ENCODE measurements at regions of chr4 and their contacts with region 1.

Region 1: DNA sequence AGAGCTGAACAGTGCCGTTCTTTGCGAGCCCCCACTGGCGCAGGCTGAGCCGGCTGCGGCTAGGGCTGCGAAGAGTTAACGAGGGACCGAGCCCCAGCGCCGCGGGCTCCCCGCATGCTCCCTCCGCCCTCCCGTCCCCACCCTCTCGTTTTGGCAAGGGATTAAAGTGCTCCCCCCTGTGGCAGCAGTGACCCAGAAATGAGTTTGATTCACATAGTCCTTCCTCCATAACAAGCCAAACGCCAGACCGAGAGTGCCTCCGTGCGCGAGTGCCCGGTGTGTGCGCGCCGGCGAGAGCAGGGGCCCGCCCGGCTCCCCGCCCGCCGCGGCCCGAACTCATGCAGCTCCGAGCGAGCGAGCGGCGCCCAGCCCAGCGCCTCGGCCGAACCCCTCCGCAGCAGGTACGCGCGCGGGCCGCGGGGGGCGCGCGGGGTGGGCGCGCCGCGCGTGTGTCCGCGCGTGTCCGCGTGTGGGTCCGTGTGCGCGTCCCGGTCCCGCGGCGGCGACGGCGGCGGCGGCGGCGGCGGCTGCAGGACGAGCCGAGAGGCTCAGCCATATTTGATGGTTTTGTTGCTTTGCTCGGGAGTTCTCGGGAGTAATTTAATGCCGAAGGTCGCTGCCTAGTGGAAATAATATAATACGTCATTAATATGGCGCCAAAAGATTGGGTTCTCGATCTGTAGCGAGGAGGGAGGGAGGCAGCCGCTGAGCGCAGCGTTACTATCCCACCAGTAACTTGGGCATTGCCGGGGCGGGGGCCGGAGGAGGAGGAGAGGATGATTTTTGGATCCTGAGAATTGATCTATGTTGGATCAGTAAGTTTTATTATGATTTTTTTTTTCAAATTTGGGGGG is at the start of gene JADE1:
- DNase-seq: peak; percentile 79 to 91 (median 89)
- ATAC-seq: peak; percentile 82
- H3K4me3 ChIP-seq: peak within 1 kb of the TSS; percentile 99
- H3K4me3 Mint-ChIP-seq: peak within 1 kb of the TSS; percentile 93 to 100 (median 97)
- H3K27ac ChIP-seq: peak within 1 kb of the TSS; percentile 93
- H3K27ac Mint-ChIP-seq: peak within 1 kb of the TSS; percentile 93 to 100 (median 96)
- H3K4me1 ChIP-seq: peaks cover 5 to 17% of the 10 kb centered on the region in 2 donors
- H3K4me1 Mint-ChIP-seq: peaks cover 12 to 28% (median 17%) of the 10 kb centered on the region in 7 donors
- H3K27me3 ChIP-seq: no peaks in the 10 kb centered on the region
- H3K27me3 Mint-ChIP-seq: no peaks in the 10 kb centered on the region
- total RNA-seq, gene JADE1: 35.4 to 79.5 (median 62.2) TPM

Region 2: GRCh38 chr4:127965062-127965802 is 844.5 kb before region 1 on chr4 and contains the starts of genes ABHD18 and MFSD8:
- CTCF ChIA-PET with region 1: no interaction called
- POLR2A ChIA-PET with region 1: no interaction called
- intact Hi-C with region 1: loop called (anchors 1 kb)
- DNase-seq: peak; percentile 93 to 98 (median 98)
- ATAC-seq: peak; percentile 96
- H3K4me3 ChIP-seq: peak within 1 kb of the TSS; percentile 100
- H3K4me3 Mint-ChIP-seq: peak within 1 kb of the TSS; percentile 78 to 98 (median 94)
- H3K27ac ChIP-seq: peak within 1 kb of the TSS; percentile 92
- H3K27ac Mint-ChIP-seq: peak within 1 kb of the TSS; percentile 88 to 99 (median 95)
- H3K4me1 ChIP-seq: peaks cover 5 to 13% of the 10 kb centered on the region in 2 donors
- H3K4me1 Mint-ChIP-seq: peaks cover 14 to 66% (median 52%) of the 10 kb centered on the region in 7 donors
- H3K27me3 ChIP-seq: no peaks in the 10 kb centered on the region
- H3K27me3 Mint-ChIP-seq: peaks cover 0 to 3% (median 0%) of the 10 kb centered on the region in 5 donors
- total RNA-seq, gene ABHD18: 22.4 to 26.6 (median 25.1) TPM
- total RNA-seq, gene MFSD8: 20.3 to 54.5 (median 23.0) TPM

Region 3: GRCh38 chr4:128287871-128288688 is 521.6 kb before region 1 on chr4:
- CTCF ChIA-PET with region 1: no interaction called
- POLR2A ChIA-PET with region 1: interaction called, 8 read pairs
- intact Hi-C with region 1: loop called (anchors 1 kb)
- DNase-seq: peak; percentile 97 to 100 (median 98)
- ATAC-seq: peak; percentile 90
- H3K4me3 ChIP-seq: peak overlapping the region; percentile 88
- H3K4me3 Mint-ChIP-seq: peak overlapping the region; percentile 81 to 98 (median 87)
- H3K27ac ChIP-seq: peak overlapping the region; percentile 98
- H3K27ac Mint-ChIP-seq: peak overlapping the region; percentile 82 to 99 (median 96)
- H3K4me1 ChIP-seq: peaks cover 12 to 25% of the 10 kb centered on the region in 2 donors
- H3K4me1 Mint-ChIP-seq: peaks cover 26 to 50% (median 46%) of the 10 kb centered on the region in 7 donors
- H3K27me3 ChIP-seq: no peaks in the 10 kb centered on the region
- H3K27me3 Mint-ChIP-seq: no peaks in the 10 kb centered on the region

Region 4: DNA sequence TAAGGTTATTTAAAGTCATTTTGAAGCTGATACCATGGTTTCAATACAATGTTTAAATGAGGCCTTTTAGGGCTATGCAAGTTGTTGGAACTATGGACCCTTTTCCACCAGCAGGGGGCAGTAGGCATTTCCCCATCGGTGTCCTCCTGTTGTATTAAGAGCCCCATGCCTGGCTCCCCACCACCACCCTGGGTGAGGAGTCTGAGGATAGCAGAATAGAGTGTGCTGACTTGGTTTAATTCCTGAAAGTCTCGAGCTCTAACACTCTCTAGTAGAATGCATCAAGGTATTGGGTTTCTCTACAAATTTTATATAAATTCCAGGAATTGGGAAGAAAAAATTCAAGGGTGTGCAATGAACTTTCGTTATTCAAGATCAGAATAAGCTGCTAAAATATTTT is 235.0 kb before region 1 on chr4:
- CTCF ChIA-PET with region 1: interaction called, 9 read pairs
- POLR2A ChIA-PET with region 1: no interaction called
- intact Hi-C with region 1: loop called (anchors 1 kb)
- DNase-seq: peak; percentile 16 to 64 (median 51)
- ATAC-seq: peak; percentile 67
- H3K4me3 ChIP-seq: no peak overlapping the region
- H3K4me3 Mint-ChIP-seq: no peak overlapping the region
- H3K27ac ChIP-seq: no peak overlapping the region
- H3K27ac Mint-ChIP-seq: no peak overlapping the region
- H3K4me1 ChIP-seq: no peaks in the 10 kb centered on the region
- H3K4me1 Mint-ChIP-seq: no peaks in the 10 kb centered on the region
- H3K27me3 ChIP-seq: no peaks in the 10 kb centered on the region
- H3K27me3 Mint-ChIP-seq: peaks cover 0 to 16% (median 12%) of the 10 kb centered on the region in 5 donors

Region 5: GRCh38 chr4:128835498-128836222 is 26.0 kb after region 1 on chr4:
- CTCF ChIA-PET with region 1: no interaction called
- POLR2A ChIA-PET with region 1: interaction called, 8 read pairs
- intact Hi-C with region 1: loop called in 1 of 2 experiments (anchors 1 kb)
- DNase-seq: no peak
- ATAC-seq: no peak
- H3K4me3 ChIP-seq: no peak overlapping the region
- H3K4me3 Mint-ChIP-seq: peak overlapping the region in 3 of 10 donors; percentile 23 to 43 (median 34)
- H3K27ac ChIP-seq: no peak overlapping the region
- H3K27ac Mint-ChIP-seq: peak overlapping the region in 4 of 9 donors; percentile 30 to 74 (median 50)
- H3K4me1 ChIP-seq: peaks cover 9 to 27% of the 10 kb centered on the region in 2 donors
- H3K4me1 Mint-ChIP-seq: peaks cover 38 to 91% (median 81%) of the 10 kb centered on the region in 7 donors
- H3K27me3 ChIP-seq: no peaks in the 10 kb centered on the region
- H3K27me3 Mint-ChIP-seq: no peaks in the 10 kb centered on the region

Region 6: DNA sequence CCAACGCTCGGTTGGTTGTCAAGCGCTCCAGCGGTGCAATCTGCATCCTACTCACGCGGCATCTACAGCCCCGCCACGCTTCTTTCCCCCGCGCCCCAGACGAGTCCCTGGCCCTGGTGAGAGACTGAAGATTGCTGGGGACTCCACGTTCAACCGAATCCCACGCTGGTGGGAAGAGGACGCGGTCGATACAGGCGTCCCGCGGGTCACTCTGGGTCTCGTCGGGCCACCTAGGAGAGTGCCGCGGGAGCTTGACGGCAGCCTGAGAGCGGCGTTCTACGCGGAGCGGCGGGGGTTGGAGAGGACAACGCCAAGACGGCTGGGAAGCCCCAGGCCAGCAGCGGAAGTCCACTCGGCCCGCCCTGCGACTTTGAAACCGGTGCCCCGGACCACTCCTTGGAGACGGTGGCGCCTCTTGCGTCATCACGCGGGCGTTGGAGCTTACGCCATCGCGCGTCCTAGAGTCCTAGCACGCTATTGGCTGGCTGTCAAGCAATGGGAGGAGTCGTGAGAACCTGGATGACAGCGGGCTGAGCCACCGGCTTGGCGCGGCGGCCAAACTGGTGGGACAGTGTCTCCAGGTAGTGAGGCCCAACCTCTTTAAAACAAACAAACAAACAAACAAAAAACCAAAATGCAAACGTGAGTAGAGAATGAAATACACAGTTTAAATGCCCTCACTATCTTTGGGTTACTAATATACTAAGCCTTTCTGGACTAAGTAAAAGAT is 283.7 kb after region 1 on chr4 and contains the start of gene SCLT1:
- CTCF ChIA-PET with region 1: no interaction called
- POLR2A ChIA-PET with region 1: interaction called, 4 read pairs
- intact Hi-C with region 1: loop called (anchors 1 kb)
- DNase-seq: peak; percentile 89 to 97 (median 94)
- ATAC-seq: peak; percentile 96
- H3K4me3 ChIP-seq: peak within 1 kb of the TSS; percentile 83
- H3K4me3 Mint-ChIP-seq: peak within 1 kb of the TSS in 5 of 10 donors; percentile 33 to 65 (median 50)
- H3K27ac ChIP-seq: peak within 1 kb of the TSS; percentile 95
- H3K27ac Mint-ChIP-seq: peak within 1 kb of the TSS in 4 of 9 donors; percentile 33 to 76 (median 50)
- H3K4me1 ChIP-seq: peaks cover 26 to 30% of the 10 kb centered on the region in 2 donors
- H3K4me1 Mint-ChIP-seq: peaks cover 16 to 57% (median 43%) of the 10 kb centered on the region in 7 donors
- H3K27me3 ChIP-seq: no peaks in the 10 kb centered on the region
- H3K27me3 Mint-ChIP-seq: no peaks in the 10 kb centered on the region
- total RNA-seq, gene SCLT1: 21.4 to 36.4 (median 26.9) TPM

Measured in naive thymus-derived CD4-positive, alpha-beta T cell (primary cell).